Activated CD4-positive, alpha-beta T cell treated with anti-CD3 and anti-CD28 coated beads for 36 hours (primary cell): ENCODE measurements at regions of chr14 and their contacts with region 1.

Region 1: GRCh38 chr14:99683619-99684355 is at the start of gene CYP46A1:
- DNase-seq: peak; percentile 100
- ATAC-seq: peak; percentile 97
- H3K4me3 Mint-ChIP-seq: peak within 1 kb of the TSS; percentile 86
- H3K27ac Mint-ChIP-seq: peak within 1 kb of the TSS; percentile 73
- H3K4me1 Mint-ChIP-seq: peaks cover 10% of the 10 kb centered on the region
- H3K27me3 Mint-ChIP-seq: peaks cover 9% of the 10 kb centered on the region
- total RNA-seq, gene CYP46A1: 0.05 to 0.23 TPM

Region 2: DNA sequence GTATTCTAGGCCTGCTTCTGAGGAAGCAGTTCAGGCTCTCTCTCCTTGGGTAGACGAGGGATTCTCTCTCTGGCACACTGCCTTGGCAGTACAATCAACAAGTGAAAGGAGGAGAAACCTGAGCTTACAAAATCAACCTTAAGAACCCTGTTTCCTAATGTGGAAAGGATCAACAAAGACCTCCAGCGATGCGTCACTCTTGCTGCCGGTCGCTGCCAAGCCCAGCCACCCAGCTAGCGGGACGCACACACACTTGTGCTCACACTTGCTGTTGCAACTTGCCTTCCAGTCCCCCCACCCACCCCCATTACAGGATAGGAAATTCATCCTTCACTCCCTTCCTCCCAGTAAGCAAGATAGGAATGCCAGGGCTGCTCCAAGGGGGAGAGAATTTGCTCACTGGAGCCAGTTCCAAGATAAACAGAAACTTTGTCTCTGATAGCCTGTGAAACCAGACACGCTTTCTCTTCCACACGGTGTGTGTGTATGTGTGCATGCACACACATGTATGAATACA is 556.1 kb before region 1 on chr14:
- CTCF ChIA-PET with region 1: no interaction called
- POLR2A ChIA-PET with region 1: no interaction called
- intact Hi-C with region 1: no loop called
- DNase-seq: no peak
- ATAC-seq: no peak
- H3K4me3 Mint-ChIP-seq: no peak overlapping the region
- H3K27ac Mint-ChIP-seq: no peak overlapping the region
- H3K4me1 Mint-ChIP-seq: peaks cover 15% of the 10 kb centered on the region
- H3K27me3 Mint-ChIP-seq: no peaks in the 10 kb centered on the region

Region 3: GRCh38 chr14:99518441-99519346 is 165.1 kb before region 1 on chr14:
- CTCF ChIA-PET with region 1: interaction called, 3 read pairs
- POLR2A ChIA-PET with region 1: no interaction called
- intact Hi-C with region 1: loop called in 1 of 2 experiments (anchors 1 kb)
- DNase-seq: peak; percentile 91
- ATAC-seq: peak; percentile 93
- H3K4me3 Mint-ChIP-seq: no peak overlapping the region
- H3K27ac Mint-ChIP-seq: no peak overlapping the region
- H3K4me1 Mint-ChIP-seq: no peaks in the 10 kb centered on the region
- H3K27me3 Mint-ChIP-seq: no peaks in the 10 kb centered on the region

Region 4: GRCh38 chr14:99737451-99737951 is 53.7 kb after region 1 on chr14:
- CTCF ChIA-PET with region 1: no interaction called
- POLR2A ChIA-PET with region 1: no interaction called
- intact Hi-C with region 1: no loop called
- DNase-seq: no peak
- ATAC-seq: no peak
- H3K4me3 Mint-ChIP-seq: no peak overlapping the region
- H3K27ac Mint-ChIP-seq: no peak overlapping the region
- H3K4me1 Mint-ChIP-seq: no peaks in the 10 kb centered on the region
- H3K27me3 Mint-ChIP-seq: peaks cover 28% of the 10 kb centered on the region

Region 5: DNA sequence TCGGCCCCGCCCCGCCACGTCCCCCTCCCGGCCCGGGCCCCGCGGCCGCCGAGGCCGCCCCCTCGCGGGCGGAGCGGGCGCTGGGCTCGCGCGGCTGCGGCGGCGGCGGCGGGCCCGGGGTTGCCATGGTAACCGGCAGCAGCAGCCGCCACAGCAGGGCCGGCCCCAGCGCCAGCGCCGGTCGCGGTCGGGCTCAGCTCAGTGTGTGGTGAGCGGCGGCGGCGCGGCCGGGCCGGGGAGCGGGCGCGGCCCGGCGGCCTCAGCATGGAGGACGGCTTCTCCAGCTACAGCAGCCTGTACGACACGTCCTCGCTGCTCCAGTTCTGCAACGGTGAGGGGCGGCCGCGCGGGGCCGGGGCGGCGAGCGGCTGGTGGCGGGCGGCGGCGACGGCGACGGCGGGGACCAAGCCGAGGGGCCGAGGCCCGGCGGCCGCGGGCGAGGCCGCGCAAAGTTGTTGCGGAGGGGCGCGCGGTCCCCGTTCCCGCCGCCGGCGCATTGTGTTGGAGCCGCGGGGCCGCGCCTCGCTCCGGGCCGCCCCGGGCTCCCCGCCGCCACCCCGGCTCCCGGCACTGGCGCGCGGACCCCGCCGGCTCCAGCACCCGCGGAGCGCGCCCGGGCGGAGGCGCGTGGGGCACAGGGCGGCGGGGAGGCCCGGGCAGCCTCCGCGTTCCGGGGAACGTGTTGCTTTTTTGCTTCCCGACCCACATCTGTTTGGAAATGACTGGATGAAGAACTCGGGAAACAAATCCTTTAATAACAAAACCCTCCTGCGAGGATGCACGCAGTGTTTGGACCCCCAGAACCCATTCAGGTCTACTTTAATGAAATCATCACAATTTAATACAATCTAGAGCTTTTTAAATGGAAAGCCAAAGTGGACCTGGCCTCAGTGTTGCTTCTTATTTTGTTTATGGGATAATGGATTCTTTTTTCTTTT is 109.7 kb after region 1 on chr14 and contains the start of gene EML1:
- CTCF ChIA-PET with region 1: no interaction called
- POLR2A ChIA-PET with region 1: no interaction called
- intact Hi-C with region 1: loop called in 1 of 2 experiments (anchors 1 kb)
- DNase-seq: peak; percentile 86
- ATAC-seq: peak; percentile 85
- H3K4me3 Mint-ChIP-seq: peak within 1 kb of the TSS; percentile 55
- H3K27ac Mint-ChIP-seq: peak within 1 kb of the TSS; percentile 32
- H3K4me1 Mint-ChIP-seq: peaks cover 34% of the 10 kb centered on the region
- H3K27me3 Mint-ChIP-seq: peaks cover 23% of the 10 kb centered on the region
- total RNA-seq, gene EML1: 1.7 TPM

Region 6: DNA sequence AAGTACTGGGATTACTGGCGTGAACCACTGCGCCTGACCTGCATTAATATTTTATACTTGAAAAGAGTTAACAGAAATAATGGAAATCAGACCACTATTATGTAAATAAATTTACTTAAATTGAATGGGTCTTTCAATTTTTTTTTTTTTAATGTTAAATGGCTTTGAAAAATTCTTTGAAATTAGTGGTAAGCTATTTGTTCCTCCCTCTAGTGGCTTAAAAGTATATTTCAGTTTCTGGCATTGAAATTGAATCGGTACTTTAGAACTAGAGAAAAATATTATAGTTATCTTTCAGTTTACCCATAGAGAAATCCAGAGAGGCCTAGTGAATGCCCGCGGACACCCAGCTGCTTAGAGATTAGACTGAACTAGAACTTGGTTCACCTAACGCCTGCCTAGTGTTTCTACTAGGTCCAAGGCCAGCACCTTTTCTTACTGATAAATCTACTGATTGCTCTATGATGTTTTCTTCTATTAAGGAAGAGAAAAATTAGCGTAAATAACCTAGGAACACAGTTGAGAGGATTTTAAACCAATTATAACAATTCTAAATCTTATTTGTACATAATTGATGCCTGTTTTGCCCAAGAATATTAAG is 215.9 kb after region 1 on chr14:
- CTCF ChIA-PET with region 1: no interaction called
- POLR2A ChIA-PET with region 1: no interaction called
- intact Hi-C with region 1: no loop called
- DNase-seq: no peak
- ATAC-seq: no peak
- H3K4me3 Mint-ChIP-seq: no peak overlapping the region
- H3K27ac Mint-ChIP-seq: no peak overlapping the region
- H3K4me1 Mint-ChIP-seq: no peaks in the 10 kb centered on the region
- H3K27me3 Mint-ChIP-seq: peaks cover 3% of the 10 kb centered on the region

Region 7: GRCh38 chr14:99946652-99947489 is 263.1 kb after region 1 on chr14:
- CTCF ChIA-PET with region 1: interaction called, 3 read pairs
- POLR2A ChIA-PET with region 1: no interaction called
- intact Hi-C with region 1: loop called in 1 of 2 experiments (anchors 1 kb)
- DNase-seq: peak; percentile 73
- ATAC-seq: peak; percentile 79
- H3K4me3 Mint-ChIP-seq: peak overlapping the region; percentile 4
- H3K27ac Mint-ChIP-seq: no peak overlapping the region
- H3K4me1 Mint-ChIP-seq: peaks cover 13% of the 10 kb centered on the region
- H3K27me3 Mint-ChIP-seq: peaks cover 15% of the 10 kb centered on the region

Region 8: DNA sequence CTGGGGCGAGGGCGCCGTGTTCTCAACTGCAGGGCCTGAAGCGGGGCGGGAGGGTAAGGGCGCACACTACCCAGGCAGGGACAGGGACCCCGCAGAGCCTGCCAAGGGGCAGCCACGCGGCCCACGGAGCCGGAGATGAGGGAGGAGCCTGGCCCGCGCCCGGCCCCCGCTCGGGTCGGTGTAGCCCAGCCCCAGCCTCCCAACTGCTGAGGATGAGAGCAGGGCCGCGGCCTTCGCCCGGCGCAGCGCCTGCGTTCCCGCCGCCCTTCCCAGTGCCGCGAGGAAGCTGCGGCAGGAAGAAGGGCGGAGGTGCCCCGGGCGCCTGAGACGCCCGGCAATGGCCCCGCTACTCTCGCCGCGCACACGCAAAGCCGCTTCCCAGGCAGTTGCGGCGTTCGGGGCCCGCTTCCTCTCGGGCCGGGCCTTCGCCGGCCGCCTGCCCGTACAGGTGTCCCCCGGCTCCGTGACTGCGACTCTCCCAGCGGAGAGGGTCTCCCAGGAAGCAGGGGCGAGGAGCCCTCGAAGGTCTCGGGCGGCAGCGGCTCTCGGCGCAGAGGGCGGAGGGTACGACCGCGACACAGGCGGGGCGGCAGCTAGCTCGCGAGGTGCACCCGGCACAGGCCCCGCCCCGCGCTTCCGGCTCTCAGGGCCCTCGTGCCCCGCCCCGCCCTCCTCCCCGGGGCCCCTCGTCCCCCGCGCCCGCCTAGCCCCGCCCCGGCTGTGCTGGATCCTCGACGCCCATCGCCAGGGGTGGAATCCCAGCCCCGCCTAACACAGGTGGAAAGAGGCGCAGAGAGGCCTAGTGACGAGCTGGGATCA is 530.4 kb after region 1 on chr14:
- CTCF ChIA-PET with region 1: no interaction called
- POLR2A ChIA-PET with region 1: no interaction called
- intact Hi-C with region 1: loop called in 1 of 2 experiments (anchors 1 kb)
- DNase-seq: peak; percentile 97
- ATAC-seq: peak; percentile 96
- H3K4me3 Mint-ChIP-seq: peak overlapping the region; percentile 79
- H3K27ac Mint-ChIP-seq: peak overlapping the region; percentile 87
- H3K4me1 Mint-ChIP-seq: peaks cover 23% of the 10 kb centered on the region
- H3K27me3 Mint-ChIP-seq: no peaks in the 10 kb centered on the region